Activated CD4-positive, alpha-beta memory T cell treated with anti-CD3 and anti-CD28 coated beads for 36 hours (primary cell): ENCODE measurements at regions of chr6 and their contacts with region 1.

Region 1: DNA sequence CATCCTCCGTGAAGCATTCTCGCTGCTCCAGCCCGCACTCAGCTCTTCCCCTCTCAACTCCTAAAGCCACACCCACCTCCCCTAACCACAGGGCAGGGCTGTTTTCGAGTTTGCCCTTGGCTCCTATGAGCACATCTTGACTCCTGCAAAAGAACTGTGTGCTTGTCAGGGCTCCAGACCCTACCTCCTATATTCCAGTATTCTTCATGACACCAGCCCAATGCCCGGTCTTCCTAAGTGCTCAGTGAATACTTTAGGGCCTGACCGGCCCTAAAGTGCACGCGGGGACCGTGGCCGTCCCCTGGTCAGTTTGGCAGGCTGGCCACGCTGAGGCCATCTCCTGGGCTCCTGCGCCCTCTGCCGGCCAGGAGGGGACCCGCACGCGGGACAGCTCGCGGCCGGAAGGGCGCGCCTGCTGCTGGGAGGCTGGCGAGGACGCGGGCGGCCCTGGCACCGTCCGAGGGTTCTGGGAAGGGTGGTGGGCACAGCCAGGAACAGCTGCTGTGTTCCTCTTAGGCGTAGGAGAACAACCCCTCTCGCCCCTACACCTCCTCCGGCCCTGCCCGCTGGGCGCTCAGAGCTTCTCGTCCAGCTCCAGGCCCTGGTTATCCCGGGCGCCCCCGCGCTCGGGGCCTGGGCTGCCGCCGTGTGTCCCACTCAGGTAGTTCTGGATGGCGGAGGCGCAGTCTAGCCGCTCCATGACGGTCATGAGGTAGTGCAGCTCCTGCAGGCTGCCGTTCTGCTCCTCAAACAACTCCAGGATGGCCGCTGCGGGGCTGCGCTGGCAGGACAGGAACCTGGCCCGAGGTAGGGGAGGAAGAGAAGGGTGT is 11.0 kb downstream of the UNC5CL start:
- DNase-seq: peak; percentile 83
- H3K4me3 Mint-ChIP-seq: peak overlapping the region; percentile 72
- H3K27ac Mint-ChIP-seq: peak overlapping the region; percentile 20
- H3K4me1 Mint-ChIP-seq: peaks cover 17% of the 10 kb centered on the region
- H3K27me3 Mint-ChIP-seq: no peaks in the 10 kb centered on the region

Region 2: DNA sequence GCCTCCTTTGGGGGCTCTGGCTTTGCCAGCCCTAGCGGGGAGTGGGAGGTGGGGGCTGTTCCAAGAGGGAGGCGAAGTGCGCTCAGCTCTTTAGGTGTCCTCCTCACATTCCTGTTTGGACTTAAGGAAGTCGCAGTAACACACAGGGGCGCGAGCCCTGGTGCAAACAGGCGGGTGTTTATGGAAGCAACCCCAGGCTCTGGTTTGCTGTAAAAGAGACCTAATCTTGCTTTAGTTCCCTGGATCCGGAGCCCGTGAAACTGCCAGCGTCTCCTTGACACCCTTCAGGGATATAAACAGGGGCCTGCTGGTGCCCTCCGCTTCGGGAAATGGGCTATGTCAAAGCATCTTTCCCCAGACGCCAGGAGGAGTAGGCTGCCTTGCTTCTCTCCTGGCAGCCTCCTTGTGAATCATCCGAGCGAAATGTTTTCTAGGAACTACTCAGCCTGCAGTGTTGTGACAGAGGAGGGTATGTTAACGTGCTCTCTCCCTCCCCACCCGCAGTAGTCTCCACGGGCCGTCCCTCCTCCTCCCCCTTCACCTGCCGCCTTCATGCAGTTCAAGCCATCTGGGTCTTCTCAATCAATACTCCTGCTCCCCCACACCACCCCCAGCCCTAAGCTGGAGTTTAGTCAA is 272.9 kb before region 1 on chr6:
- CTCF ChIA-PET with region 1: no interaction called
- POLR2A ChIA-PET with region 1: no interaction called
- intact Hi-C with region 1: no loop called
- DNase-seq: no peak
- H3K4me3 Mint-ChIP-seq: no peak overlapping the region
- H3K27ac Mint-ChIP-seq: no peak overlapping the region
- H3K4me1 Mint-ChIP-seq: no peaks in the 10 kb centered on the region
- H3K27me3 Mint-ChIP-seq: peaks cover 37% of the 10 kb centered on the region

Region 3: GRCh38 chr6:41008011-41008410 is 20.0 kb before region 1 on chr6:
- CTCF ChIA-PET with region 1: interaction called, 19 read pairs
- POLR2A ChIA-PET with region 1: no interaction called
- intact Hi-C with region 1: loop called (anchors 1 kb)
- DNase-seq: no peak
- H3K4me3 Mint-ChIP-seq: no peak overlapping the region
- H3K27ac Mint-ChIP-seq: no peak overlapping the region
- H3K4me1 Mint-ChIP-seq: no peaks in the 10 kb centered on the region
- H3K27me3 Mint-ChIP-seq: peaks cover 9% of the 10 kb centered on the region

Region 4: GRCh38 chr6:41039060-41039998 is 11.3 kb after region 1 on chr6 and contains the start of gene UNC5CL:
- CTCF ChIA-PET with region 1: interaction called, 57 read pairs
- POLR2A ChIA-PET with region 1: interaction called, 3 read pairs
- intact Hi-C with region 1: no loop called
- DNase-seq: peak; percentile 64
- H3K4me3 Mint-ChIP-seq: no peak within 1 kb of the TSS
- H3K27ac Mint-ChIP-seq: no peak within 1 kb of the TSS
- H3K4me1 Mint-ChIP-seq: peaks cover 3% of the 10 kb centered on the region
- H3K27me3 Mint-ChIP-seq: no peaks in the 10 kb centered on the region
- total RNA-seq, gene UNC5CL: 2.4 to 2.5 TPM

Region 5: GRCh38 chr6:41055149-41055548 is 27.1 kb after region 1 on chr6:
- CTCF ChIA-PET with region 1: interaction called, 24 read pairs
- POLR2A ChIA-PET with region 1: no interaction called
- intact Hi-C with region 1: no loop called
- DNase-seq: no peak
- H3K4me3 Mint-ChIP-seq: no peak overlapping the region
- H3K27ac Mint-ChIP-seq: no peak overlapping the region
- H3K4me1 Mint-ChIP-seq: peaks cover 13% of the 10 kb centered on the region
- H3K27me3 Mint-ChIP-seq: no peaks in the 10 kb centered on the region